ENCODE measurements at regions of chr1 and their contacts with region 1.

Region 1: GRCh38 chr1:21324368-21325141 is 34.3 kb upstream of the ECE1 start:
- DNase-seq: no peak
- ATAC-seq: no peak
- H3K4me3 Mint-ChIP-seq: no peak overlapping the region
- H3K27ac Mint-ChIP-seq: peak overlapping the region; percentile 79
- H3K4me1 Mint-ChIP-seq: peaks cover 95% of the 10 kb centered on the region
- H3K27me3 Mint-ChIP-seq: no peaks in the 10 kb centered on the region
- CTCF ChIP-seq: no peak

Region 2: GRCh38 chr1:21244986-21245687 is 79.4 kb before region 1 on chr1:
- CTCF ChIA-PET with region 1: interaction called, 11 read pairs
- POLR2A ChIA-PET with region 1: no interaction called
- DNase-seq: peak; percentile 67
- ATAC-seq: peak; percentile 88
- H3K4me3 Mint-ChIP-seq: no peak overlapping the region
- H3K27ac Mint-ChIP-seq: no peak overlapping the region
- H3K4me1 Mint-ChIP-seq: peaks cover 7% of the 10 kb centered on the region
- H3K27me3 Mint-ChIP-seq: no peaks in the 10 kb centered on the region
- CTCF ChIP-seq: peak; percentile 66

Region 3: GRCh38 chr1:21308847-21309652 is 15.5 kb before region 1 on chr1:
- CTCF ChIA-PET with region 1: interaction called, 40 read pairs
- POLR2A ChIA-PET with region 1: no interaction called
- DNase-seq: no peak
- ATAC-seq: no peak
- H3K4me3 Mint-ChIP-seq: no peak overlapping the region
- H3K27ac Mint-ChIP-seq: peak overlapping the region; percentile 60
- H3K4me1 Mint-ChIP-seq: peaks cover 67% of the 10 kb centered on the region
- H3K27me3 Mint-ChIP-seq: no peaks in the 10 kb centered on the region
- CTCF ChIP-seq: no peak

Region 4: DNA sequence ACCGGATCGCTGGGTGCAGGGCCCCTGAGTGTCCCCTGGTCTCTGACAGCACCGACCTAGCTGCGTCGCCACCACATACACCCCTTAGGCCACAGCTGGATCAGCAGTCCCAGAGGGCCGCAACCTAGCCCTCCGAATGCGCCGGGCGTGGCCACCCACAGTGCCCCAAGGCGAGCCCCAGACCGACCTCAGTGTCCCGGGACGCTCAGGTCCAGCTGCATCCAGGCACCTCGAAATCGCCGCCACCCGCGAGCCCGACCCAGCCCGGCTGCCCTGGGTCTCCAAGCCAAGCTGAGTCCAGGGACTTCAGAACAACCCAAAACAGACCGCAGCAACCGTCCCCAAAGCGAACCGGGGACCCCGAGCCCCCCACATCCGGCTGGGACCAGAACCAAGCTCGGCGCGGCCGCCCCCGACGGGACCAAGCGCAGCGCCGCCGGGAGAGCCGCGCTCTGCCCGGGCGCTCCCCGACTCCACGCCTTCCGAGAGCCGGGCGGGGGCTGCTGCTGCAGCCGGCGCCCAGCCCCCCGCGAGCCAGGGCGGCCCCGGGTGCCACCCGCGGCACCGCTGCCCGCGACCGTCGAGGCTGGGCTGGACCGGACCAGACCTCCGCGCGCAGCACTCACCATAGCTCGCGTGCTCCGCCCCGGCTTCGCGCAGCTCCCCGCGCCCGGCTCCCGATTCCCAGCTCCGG is 20.3 kb after region 1 on chr1:
- CTCF ChIA-PET with region 1: interaction called, 10 read pairs
- POLR2A ChIA-PET with region 1: interaction called, 6 read pairs
- DNase-seq: peak; percentile 40
- ATAC-seq: peak; percentile 17
- H3K4me3 Mint-ChIP-seq: peak overlapping the region; percentile 79
- H3K27ac Mint-ChIP-seq: no peak overlapping the region
- H3K4me1 Mint-ChIP-seq: peaks cover 19% of the 10 kb centered on the region
- H3K27me3 Mint-ChIP-seq: peaks cover 22% of the 10 kb centered on the region
- CTCF ChIP-seq: no peak

Measured in WTC11 (cell line).